A549 (cell line): ENCODE measurements at regions of chr11 and their contacts with region 1.

Region 1: DNA sequence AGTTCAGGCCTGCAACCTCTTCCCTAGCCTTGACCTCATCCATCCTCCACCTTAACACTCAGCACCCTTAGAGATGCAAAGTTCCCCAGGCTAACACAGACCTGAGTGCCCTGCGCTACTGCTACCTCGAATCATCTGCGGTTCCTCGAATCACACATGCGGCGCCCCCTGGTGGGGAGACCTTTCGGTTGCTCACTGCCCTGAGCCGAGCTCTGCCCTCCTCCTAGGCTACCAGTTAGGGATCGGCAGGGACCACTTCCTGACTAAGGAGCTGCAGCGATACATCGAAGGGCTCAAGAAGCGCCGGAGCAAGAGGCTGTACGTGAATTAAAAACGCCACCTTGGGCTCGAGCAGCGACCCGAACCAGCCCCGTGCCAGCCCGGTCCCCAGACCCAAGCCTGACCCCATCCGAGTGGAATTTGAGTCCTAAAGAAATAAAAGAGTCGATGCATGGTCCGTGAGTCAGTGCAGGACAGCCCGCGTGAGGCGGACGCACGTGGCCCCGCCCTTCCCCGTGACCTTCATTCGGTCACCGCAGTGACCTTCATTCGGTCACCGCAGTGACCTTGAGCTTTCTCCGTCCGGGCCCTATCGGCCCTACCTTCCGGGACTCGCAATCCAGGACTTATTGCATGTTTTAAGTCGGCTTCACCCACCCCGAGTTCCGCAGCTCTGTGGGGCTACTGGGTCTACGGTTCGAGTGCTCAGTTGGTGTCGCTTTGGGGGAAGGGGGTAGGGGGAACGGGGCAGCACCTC is 830 bp upstream of the ESRRA start:
- DNase-seq: peak; percentile 94 to 96
- ATAC-seq: peak; percentile 59 to 80
- H3K4me3 ChIP-seq: peak overlapping the region; percentile 53
- H3K27ac ChIP-seq: peak overlapping the region; percentile 79 to 92
- H3K4me1 ChIP-seq: peaks cover 20% of the 10 kb centered on the region
- CTCF ChIP-seq: peak; percentile 88
- EP300 ChIP-seq: no peak
- POLR2A ChIP-seq: peak; percentile 42; the same call in 1 of the 2 replicates
- RAD21 ChIP-seq: peak; percentile 53 to 56

Region 2: GRCh38 chr11:64204464-64204989 is 100.0 kb before region 1 on chr11:
- CTCF ChIA-PET with region 1: interaction called, 133 read pairs
- POLR2A ChIA-PET with region 1: interaction called, 3 read pairs
- DNase-seq: peak; percentile 89 to 94
- ATAC-seq: peak; percentile 55 to 83
- H3K4me3 ChIP-seq: no peak overlapping the region
- H3K27ac ChIP-seq: no peak overlapping the region
- H3K4me1 ChIP-seq: peaks cover 9% of the 10 kb centered on the region; the same call in 1 of the 3 replicates
- CTCF ChIP-seq: peak; percentile 77
- EP300 ChIP-seq: no peak
- POLR2A ChIP-seq: no peak
- RAD21 ChIP-seq: peak; percentile 62 to 80

Region 3: GRCh38 chr11:64233913-64234834 is 70.3 kb before region 1 on chr11 and contains the start of gene VEGFB:
- CTCF ChIA-PET with region 1: interaction called, 16 read pairs
- POLR2A ChIA-PET with region 1: no interaction called
- DNase-seq: peak in 1 of 2 experiments; percentile 53
- ATAC-seq: peak; percentile 46 to 64
- H3K4me3 ChIP-seq: peak within 1 kb of the TSS; percentile 96
- H3K27ac ChIP-seq: peak within 1 kb of the TSS; percentile 96 to 97
- H3K4me1 ChIP-seq: peaks cover 40% of the 10 kb centered on the region
- CTCF ChIP-seq: no peak
- EP300 ChIP-seq: no peak
- POLR2A ChIP-seq: no peak
- RAD21 ChIP-seq: no peak
- polyA plus RNA-seq, gene VEGFB: 6.8 and 10.9 TPM in 2 replicates

Region 4: GRCh38 chr11:64246871-64247728 is 57.4 kb before region 1 on chr11 and contains the start of gene PPP1R14B:
- CTCF ChIA-PET with region 1: interaction called, 206 read pairs
- POLR2A ChIA-PET with region 1: interaction called, 10 read pairs
- DNase-seq: peak; percentile 84 to 89
- ATAC-seq: peak; percentile 40 to 73
- H3K4me3 ChIP-seq: peak within 1 kb of the TSS; percentile 84
- H3K27ac ChIP-seq: peak within 1 kb of the TSS; percentile 99 to 100
- H3K4me1 ChIP-seq: peaks cover 45% of the 10 kb centered on the region
- CTCF ChIP-seq: no peak
- EP300 ChIP-seq: no peak
- POLR2A ChIP-seq: peak; percentile 14; the same call in 1 of the 2 replicates
- RAD21 ChIP-seq: no peak
- polyA plus RNA-seq, gene PPP1R14B: 129 and 154 TPM in 2 replicates

Region 5: DNA sequence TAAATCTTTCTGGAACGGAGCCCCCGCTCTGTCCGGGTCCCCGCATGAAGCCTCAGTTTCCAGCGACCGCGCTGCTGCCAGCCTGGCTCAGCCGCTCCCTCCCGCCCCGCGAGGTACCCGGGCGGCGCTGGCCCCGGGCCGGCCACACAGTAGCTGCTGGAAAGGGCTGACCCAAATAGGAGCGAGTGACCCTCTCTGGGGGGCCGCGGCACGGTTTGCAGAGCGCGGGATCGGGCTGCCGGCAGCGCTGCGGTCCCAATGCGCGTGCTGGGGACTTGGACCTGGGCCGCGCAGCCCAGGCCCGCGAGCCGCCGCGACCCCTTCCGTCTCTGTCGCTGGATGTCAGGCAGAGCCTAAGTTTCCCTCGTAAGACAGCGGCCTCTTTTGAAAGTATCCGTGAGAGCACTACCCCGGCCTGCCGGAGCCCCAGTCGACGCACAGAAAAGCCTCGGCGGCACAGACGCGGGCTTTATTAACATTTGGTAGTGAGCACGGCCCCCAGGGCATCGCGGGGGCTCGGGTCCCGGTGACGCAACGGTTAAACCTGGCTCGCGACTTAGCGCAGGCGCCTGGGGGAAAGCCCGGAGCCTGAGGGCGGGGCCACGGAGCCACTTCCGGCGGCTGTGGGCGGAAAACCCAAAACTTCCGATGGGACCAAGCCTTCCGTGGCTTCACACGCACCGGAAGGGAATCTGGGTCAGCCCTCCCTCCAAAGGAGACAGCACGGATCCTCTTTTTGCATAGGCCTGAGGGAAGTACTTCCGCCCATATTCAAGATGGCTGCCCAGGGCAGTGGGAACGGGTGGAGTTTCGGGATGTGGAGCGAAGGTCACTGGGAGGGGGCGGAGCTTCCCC is 34.9 kb before region 1 on chr11:
- CTCF ChIA-PET with region 1: interaction called, 448 read pairs
- POLR2A ChIA-PET with region 1: interaction called, 34 read pairs
- DNase-seq: peak; percentile 87 to 100
- ATAC-seq: peak; percentile 80 to 91
- H3K4me3 ChIP-seq: peak overlapping the region; percentile 72
- H3K27ac ChIP-seq: peak overlapping the region; percentile 94 to 97
- H3K4me1 ChIP-seq: peaks cover 32% of the 10 kb centered on the region
- CTCF ChIP-seq: peak; percentile 12; the same call in 1 of the 3 replicates
- EP300 ChIP-seq: no peak
- POLR2A ChIP-seq: peak; percentile 32
- RAD21 ChIP-seq: no peak

Region 6: GRCh38 chr11:64284048-64284961 is 20.2 kb before region 1 on chr11 and contains the start of gene BAD:
- CTCF ChIA-PET with region 1: interaction called, 448 read pairs
- POLR2A ChIA-PET with region 1: interaction called, 17 read pairs
- DNase-seq: peak; percentile 93 to 97
- ATAC-seq: peak; percentile 82 to 93
- H3K4me3 ChIP-seq: peak within 1 kb of the TSS; percentile 63
- H3K27ac ChIP-seq: peak within 1 kb of the TSS; percentile 93 to 98
- H3K4me1 ChIP-seq: peaks cover 17% of the 10 kb centered on the region; the same call in 1 of the 3 replicates
- CTCF ChIP-seq: no peak
- EP300 ChIP-seq: no peak
- POLR2A ChIP-seq: peak; percentile 27
- RAD21 ChIP-seq: no peak
- polyA plus RNA-seq, gene BAD: 33.7 and 35.6 TPM in 2 replicates